Ovary (tissue), 10 donors: ENCODE measurements at regions of chr22 and their contacts with region 1.

Region 1: GRCh38 chr22:31943976-31944699 is at the start of gene YWHAH:
- DNase-seq: peak; percentile 96 to 99 (median 98)
- H3K4me3 ChIP-seq: peak within 1 kb of the TSS; percentile 84
- H3K27ac ChIP-seq: peak within 1 kb of the TSS; percentile 95 to 96
- H3K4me1 ChIP-seq: peaks cover 4% of the 10 kb centered on the region
- H3K27me3 ChIP-seq: no peaks in the 10 kb centered on the region
- CTCF ChIP-seq: no peak
- EP300 ChIP-seq: no peak
- POLR2A ChIP-seq: peak; percentile 94
- total RNA-seq, gene YWHAH: 53.1 to 118 (median 107) TPM

Region 2: DNA sequence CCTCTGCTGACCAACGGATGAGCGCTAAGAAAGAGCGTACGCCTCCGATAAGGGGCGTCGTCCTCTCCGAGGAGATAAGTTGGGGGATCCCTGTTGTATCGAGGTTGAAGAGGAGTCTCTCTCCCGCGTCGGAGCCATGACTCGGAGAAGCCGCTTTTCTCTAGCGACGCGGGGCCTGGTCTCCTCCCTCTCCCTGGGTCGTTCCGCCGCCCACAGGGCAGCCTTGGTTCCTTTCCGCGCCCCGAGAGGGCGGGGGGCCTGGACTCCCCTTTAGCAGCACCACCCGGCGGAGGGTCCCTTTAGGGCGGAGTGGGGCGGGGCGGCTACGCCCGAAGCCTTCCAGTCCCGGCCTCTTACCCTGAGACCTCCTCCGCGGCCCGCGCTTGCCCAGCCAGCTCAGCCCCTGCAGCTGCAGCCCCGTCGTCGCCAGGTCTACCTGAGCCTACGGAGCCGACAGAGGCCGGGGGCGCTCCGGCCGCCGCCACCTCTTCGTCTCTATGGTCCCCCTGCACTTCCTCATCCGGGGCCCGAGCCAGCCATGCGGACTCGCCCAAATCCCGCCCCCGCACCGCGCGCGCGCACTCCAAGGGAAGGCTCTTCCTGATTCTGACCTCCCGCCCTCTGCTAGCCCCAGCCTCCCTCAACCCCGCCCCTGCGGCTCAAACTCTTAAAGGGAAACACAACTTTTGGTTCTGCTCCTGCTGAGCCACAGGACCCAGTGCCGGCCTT is 194.3 kb before region 1 on chr22 and contains the start of gene PRR14L:
- intact Hi-C with region 1: loop called in 2 of 4 experiments (anchors 10 kb)
- DNase-seq: peak; percentile 98 to 99 (median 99)
- H3K4me3 ChIP-seq: peak within 1 kb of the TSS; percentile 99
- H3K27ac ChIP-seq: peak within 1 kb of the TSS; percentile 29 to 58
- H3K4me1 ChIP-seq: peaks cover 9% of the 10 kb centered on the region
- H3K27me3 ChIP-seq: no peaks in the 10 kb centered on the region
- CTCF ChIP-seq: no peak
- EP300 ChIP-seq: no peak
- POLR2A ChIP-seq: peak; percentile 60
- total RNA-seq, gene PRR14L: 14.3 to 52.0 (median 46.5) TPM

Region 3: DNA sequence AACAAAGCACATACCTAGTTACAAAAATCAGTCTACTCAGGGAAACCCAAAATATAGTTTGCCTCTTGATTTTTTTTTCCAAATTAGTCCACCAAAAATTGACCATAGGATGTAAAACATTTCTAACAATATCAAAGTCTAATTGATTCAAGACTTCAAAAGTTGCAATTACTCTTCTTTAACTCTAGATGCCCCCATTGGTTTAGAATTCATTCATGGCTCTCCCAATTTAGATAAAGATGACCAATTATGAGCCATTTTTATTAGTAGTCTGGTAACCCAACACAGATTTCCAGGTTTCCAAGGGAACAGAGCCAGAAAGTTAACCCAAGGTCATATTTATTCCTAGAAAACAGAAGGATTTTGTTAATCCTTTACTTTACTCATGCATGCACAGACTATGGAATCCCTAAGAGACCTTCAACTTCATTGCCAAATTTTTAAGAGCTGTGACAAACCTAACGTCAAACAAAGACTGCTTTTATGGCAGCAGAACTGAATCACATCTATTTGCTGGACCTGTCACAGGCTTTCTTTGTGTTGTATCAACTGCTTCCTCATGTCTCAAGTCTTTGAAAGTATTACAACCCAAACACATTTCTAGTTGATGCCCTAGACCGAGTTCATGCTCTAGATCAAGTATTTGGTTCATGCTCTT is 159.6 kb after region 1 on chr22:
- intact Hi-C with region 1: no loop called
- DNase-seq: no peak
- H3K4me3 ChIP-seq: no peak overlapping the region
- H3K27ac ChIP-seq: no peak overlapping the region
- H3K4me1 ChIP-seq: no peaks in the 10 kb centered on the region
- H3K27me3 ChIP-seq: no peaks in the 10 kb centered on the region
- CTCF ChIP-seq: no peak
- EP300 ChIP-seq: no peak
- POLR2A ChIP-seq: no peak